ENCODE measurements at regions of chr9 and their contacts with region 1.

Region 1: GRCh38 chr9:107489687-107490605 is at the start of gene KLF4:
- DNase-seq: peak; percentile 94
- H3K4me3 ChIP-seq: peak within 1 kb of the TSS; percentile 47 to 68 (median 63)
- H3K27ac ChIP-seq: peak within 1 kb of the TSS; percentile 66
- H3K4me1 ChIP-seq: peaks cover 19% of the 10 kb centered on the region
- H3K27me3 ChIP-seq: peaks cover 8 to 22% of the 10 kb centered on the region in 2 experiments
- CTCF ChIP-seq: no peak
- POLR2A ChIP-seq: peak; percentile 33
- total RNA-seq, gene KLF4: 1.5 and 3.8 TPM in 2 replicates

Region 2: DNA sequence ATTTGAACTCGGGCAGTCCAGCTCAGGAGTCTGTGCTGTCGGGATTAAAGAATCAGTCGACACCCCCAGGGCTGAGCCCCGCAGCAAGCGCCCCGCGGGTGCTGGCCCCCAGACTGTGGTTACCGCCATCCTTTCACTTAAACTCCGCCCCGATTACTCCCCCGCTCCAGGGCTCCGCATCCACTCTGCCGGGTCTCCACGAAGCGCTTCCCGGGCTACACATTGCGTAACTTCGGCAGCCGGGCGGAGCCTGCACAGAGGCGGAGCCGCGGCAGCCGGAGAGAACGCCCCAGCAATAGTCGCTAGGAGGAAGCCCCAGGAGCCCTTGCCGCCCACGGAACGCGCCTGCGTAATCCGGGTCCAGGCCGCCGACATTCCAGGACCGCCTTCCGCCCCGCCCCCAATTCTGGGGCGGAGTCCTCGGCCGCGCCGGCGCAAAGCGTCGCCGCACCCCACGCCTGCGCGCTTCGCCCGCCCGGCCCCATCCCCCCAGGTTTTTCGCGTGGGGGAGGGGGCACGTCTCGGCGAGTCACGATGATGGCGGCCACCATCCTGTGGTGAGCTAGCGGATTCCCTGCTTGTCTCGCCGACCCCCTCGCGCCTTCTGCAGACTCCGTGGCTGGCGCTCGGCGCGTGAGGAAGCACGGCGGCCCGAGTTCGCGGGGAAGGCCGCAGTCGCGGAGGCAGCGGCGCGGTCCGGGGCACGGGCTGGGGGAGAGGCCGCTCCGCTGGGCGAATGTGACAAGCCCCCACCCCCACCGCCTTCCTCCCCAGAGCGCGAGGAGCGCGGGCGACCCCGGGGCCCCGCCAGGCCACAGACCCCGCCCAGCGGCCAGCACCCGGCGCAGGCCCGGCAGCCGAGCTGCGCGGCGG is 207.0 kb before region 1 on chr9 and contains the start of gene RAD23B:
- CTCF ChIA-PET with region 1: no interaction called
- POLR2A ChIA-PET with region 1: interaction called, 3 read pairs
- dilution Hi-C with region 1: no loop called
- intact Hi-C with region 1: loop called (anchors 1 kb)
- DNase-seq: peak; percentile 99
- H3K4me3 ChIP-seq: peak within 1 kb of the TSS; percentile 54 to 93 (median 92)
- H3K27ac ChIP-seq: peak within 1 kb of the TSS; percentile 82
- H3K4me1 ChIP-seq: peaks cover 14% of the 10 kb centered on the region
- H3K27me3 ChIP-seq: no peaks in the 10 kb centered on the region
- CTCF ChIP-seq: no peak
- POLR2A ChIP-seq: peak; percentile 73
- total RNA-seq, gene RAD23B: 100 and 102 TPM in 2 replicates

Region 3: DNA sequence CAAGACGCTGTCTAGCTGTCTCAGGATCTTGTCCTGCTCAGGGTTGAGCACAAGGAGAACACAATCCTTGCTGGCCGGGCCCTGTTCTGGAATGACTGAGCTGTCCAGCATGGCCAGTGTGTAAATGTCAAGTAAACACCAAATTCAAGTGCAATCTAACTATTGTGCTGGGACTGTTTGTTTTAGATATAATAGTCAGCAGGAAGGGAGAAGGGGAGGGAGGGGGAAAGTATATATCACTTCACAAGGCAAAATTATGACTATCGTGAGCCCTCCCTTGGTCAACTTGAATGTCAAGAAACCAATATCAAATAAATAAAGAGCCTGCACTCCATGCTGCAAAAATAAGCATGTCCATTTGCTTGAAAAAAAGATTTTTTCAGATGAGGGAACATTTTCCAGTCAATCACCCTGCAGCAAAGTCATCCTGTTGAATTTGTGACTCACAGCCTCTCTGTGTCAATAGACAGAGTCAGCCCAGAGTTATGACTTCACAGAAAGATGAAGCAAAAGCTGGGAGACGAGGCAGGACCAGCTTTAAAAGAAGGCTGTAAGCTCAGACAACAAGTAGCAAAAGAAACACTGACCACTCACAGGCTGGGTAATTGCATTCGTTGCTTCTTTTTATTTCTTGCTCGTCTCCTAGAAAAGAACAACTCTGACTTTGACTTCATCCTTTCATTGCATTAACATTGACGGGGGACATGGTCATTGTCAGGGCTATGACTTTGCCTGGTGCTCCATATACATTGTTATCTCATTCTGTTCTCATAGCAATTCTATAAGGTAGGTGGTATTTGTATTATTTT is 14.8 kb after region 1 on chr9:
- CTCF ChIA-PET with region 1: interaction called, 6 read pairs
- POLR2A ChIA-PET with region 1: interaction called, 3 read pairs
- dilution Hi-C with region 1: no loop called
- intact Hi-C with region 1: loop called (anchors 2 kb)
- DNase-seq: peak; percentile 87
- H3K4me3 ChIP-seq: no peak overlapping the region
- H3K27ac ChIP-seq: peak overlapping the region; percentile 48
- H3K4me1 ChIP-seq: peaks cover 15% of the 10 kb centered on the region
- H3K27me3 ChIP-seq: no peaks in the 10 kb centered on the region
- CTCF ChIP-seq: no peak
- POLR2A ChIP-seq: peak; percentile 29

Region 4: DNA sequence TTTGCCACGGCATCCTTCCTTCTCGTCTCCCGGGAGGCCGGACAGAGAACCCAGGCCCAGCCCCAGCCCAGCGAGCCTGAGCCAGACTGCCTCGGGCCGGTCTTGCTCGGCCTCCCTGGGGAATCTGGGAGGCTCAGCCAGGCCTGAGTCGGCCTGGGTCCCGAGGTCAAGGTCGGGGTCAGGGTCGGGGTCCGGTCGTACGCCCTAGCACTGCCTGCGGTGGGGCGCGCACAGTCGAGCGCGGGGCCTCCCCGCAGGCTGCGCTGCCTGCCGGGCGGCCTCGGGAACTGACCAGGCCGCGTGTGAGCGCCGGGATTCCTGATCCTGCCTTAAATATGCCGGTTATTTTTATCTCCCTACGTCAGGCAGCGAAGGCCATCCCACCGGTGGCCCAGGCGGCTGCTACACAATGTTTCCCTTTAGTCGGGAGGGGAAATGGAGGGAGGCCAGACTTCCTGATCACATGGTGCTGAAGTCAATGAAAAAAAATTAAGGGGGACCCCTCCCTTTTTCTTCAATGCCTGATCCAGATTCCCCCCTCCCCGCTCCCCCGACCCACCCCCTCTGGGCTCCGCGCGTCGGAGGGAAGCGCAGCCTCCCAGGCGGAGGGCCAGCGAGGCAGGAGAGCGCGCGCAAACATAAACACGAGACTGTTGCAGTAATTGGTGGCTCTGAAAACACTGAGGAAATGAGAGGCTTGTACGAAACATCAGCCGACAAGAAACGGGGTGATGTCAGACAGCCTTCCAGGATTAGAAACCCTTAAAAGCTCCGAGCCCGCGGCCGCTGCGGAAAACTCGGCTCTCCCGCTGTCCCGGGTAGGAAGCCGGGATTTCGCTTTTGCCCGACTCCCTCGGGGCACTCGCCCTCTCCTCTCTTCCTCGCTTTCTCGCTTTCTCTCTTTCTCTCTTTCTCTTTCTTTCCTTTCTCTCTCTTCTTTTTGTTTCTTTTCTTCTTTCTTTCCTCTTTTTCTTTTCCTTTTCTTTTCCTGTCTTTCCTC is 147.8 kb after region 1 on chr9:
- CTCF ChIA-PET with region 1: no interaction called
- POLR2A ChIA-PET with region 1: interaction called, 4 read pairs
- dilution Hi-C with region 1: no loop called
- intact Hi-C with region 1: loop called (anchors 1 kb)
- DNase-seq: peak; percentile 99
- H3K4me3 ChIP-seq: peak overlapping the region; percentile 4 to 66 (median 36)
- H3K27ac ChIP-seq: peak overlapping the region; percentile 91
- H3K4me1 ChIP-seq: peaks cover 14% of the 10 kb centered on the region
- H3K27me3 ChIP-seq: no peaks in the 10 kb centered on the region
- CTCF ChIP-seq: peak; percentile 13 to 34
- POLR2A ChIP-seq: peak; percentile 80

Region 5: DNA sequence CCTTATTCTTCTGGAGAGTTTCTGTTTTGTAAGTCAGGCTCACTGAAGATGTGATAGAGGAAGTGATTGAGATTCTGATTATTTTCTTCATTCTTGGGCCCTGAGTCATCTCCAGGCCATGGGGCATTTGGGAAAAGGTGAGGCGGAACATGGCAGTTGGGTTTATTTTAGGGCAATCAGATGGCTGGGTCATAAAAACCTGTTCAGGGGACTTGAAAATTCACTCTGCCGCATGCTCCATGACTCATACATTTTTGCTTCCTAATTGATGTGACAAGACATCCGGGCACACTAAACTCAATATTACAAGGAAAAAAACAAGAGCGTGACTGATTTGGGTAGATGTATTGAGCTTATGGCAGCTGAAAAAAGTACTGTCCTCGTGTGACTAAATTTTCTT is 265.3 kb after region 1 on chr9:
- CTCF ChIA-PET with region 1: interaction called, 6 read pairs
- POLR2A ChIA-PET with region 1: no interaction called
- dilution Hi-C with region 1: no loop called
- intact Hi-C with region 1: loop called (anchors 2 kb)
- DNase-seq: peak; percentile 87
- H3K4me3 ChIP-seq: no peak overlapping the region
- H3K27ac ChIP-seq: peak overlapping the region; percentile 68
- H3K4me1 ChIP-seq: peaks cover 45% of the 10 kb centered on the region
- H3K27me3 ChIP-seq: no peaks in the 10 kb centered on the region
- CTCF ChIP-seq: no peak
- POLR2A ChIP-seq: no peak

Region 6: GRCh38 chr9:107905308-107906020 is 415.5 kb after region 1 on chr9:
- CTCF ChIA-PET with region 1: no interaction called
- POLR2A ChIA-PET with region 1: no interaction called
- dilution Hi-C with region 1: no loop called
- intact Hi-C with region 1: no loop called
- DNase-seq: no peak
- H3K4me3 ChIP-seq: no peak overlapping the region
- H3K27ac ChIP-seq: no peak overlapping the region
- H3K4me1 ChIP-seq: no peaks in the 10 kb centered on the region
- H3K27me3 ChIP-seq: no peaks in the 10 kb centered on the region
- CTCF ChIP-seq: no peak
- POLR2A ChIP-seq: no peak

Region 7: GRCh38 chr9:108478431-108478837 is 988.5 kb after region 1 on chr9:
- CTCF ChIA-PET with region 1: no interaction called
- POLR2A ChIA-PET with region 1: no interaction called
- dilution Hi-C with region 1: no loop called
- intact Hi-C with region 1: loop called (anchors 5 kb)
- DNase-seq: peak; percentile 77
- H3K4me3 ChIP-seq: no peak overlapping the region
- H3K27ac ChIP-seq: peak overlapping the region; percentile 73
- H3K4me1 ChIP-seq: peaks cover 28% of the 10 kb centered on the region
- H3K27me3 ChIP-seq: no peaks in the 10 kb centered on the region
- CTCF ChIP-seq: no peak
- POLR2A ChIP-seq: no peak